Activated T-helper 1 cell treated with anti-CD3 and anti-CD28 coated beads, Interleukin-12 subunit alpha, Interleukin-12 subunit beta, Interleukin-2, Interleukin-4 antibody, amounts not matched to agents 30 ng/mL and 10 ng/mL and 1 ng/mL, durations not matched to agents 14 hours and 24 hours and 36 hours (primary cell): ENCODE measurements at regions of chr6 and their contacts with region 1.

Region 1: DNA sequence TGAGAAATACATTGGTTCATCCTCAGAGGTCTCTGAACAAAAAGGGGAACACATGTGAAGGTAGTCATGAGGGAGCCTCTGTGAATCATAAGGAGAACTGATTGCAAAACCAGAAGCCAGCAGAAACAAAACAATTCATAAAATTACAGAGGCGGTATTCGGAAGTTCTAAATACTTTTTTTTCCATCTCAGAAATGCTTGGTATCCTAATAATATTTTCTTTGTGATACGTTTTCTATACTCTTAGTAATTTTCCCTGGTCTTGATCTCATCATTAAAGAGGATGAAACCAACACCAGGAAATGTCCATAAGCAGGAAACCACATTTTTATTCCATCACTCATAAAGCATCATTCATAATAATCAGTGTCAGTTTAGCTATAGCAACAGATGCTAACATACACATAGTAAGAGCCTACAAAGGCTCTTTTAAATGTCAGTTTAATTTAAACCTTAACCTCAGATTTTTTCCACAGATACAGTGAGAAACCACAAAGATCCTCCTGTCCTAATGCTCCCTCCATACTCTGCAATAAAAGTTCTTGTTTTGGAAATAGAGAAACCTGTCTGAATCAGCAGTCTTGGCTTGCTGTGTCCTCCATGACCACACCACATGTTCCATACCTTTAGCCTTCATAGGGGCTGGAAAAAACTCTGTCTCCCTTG is 29.2 kb downstream of the SGK1 start:
- DNase-seq: no peak
- H3K4me3 Mint-ChIP-seq: peak overlapping the region; percentile 72
- H3K27ac Mint-ChIP-seq: peak overlapping the region; percentile 96
- H3K4me1 Mint-ChIP-seq: peaks cover 38% of the 10 kb centered on the region
- H3K27me3 Mint-ChIP-seq: peaks cover 2% of the 10 kb centered on the region

Region 2: DNA sequence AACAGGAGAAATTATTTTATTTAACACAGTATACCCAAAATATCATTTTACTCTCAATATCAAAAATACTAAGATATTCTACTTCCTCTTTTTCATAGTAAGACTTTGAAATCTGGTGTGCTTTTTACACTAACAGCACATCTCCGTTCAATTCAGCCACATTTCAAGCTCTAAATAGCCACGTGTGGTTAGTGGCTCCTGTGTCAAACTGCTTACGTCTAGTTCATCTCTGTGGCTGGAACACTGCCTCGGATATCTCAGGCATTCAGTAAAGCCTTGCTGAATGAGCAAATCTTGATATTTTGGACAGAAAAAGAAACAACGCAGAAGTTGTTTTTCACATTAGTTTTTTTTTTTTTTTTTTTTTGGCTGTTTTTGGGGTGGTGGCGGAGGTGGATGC is 911.5 kb before region 1 on chr6:
- intact Hi-C with region 1: no loop called
- DNase-seq: no peak
- H3K4me3 Mint-ChIP-seq: no peak overlapping the region
- H3K27ac Mint-ChIP-seq: no peak overlapping the region
- H3K4me1 Mint-ChIP-seq: no peaks in the 10 kb centered on the region
- H3K27me3 Mint-ChIP-seq: peaks cover 4% of the 10 kb centered on the region

Region 3: GRCh38 chr6:134235937-134236751 is 52.5 kb before region 1 on chr6:
- intact Hi-C with region 1: loop called (anchors 1 kb)
- DNase-seq: no peak
- H3K4me3 Mint-ChIP-seq: peak overlapping the region; percentile 17
- H3K27ac Mint-ChIP-seq: peak overlapping the region; percentile 85
- H3K4me1 Mint-ChIP-seq: peaks cover 52% of the 10 kb centered on the region
- H3K27me3 Mint-ChIP-seq: no peaks in the 10 kb centered on the region

Region 4: DNA sequence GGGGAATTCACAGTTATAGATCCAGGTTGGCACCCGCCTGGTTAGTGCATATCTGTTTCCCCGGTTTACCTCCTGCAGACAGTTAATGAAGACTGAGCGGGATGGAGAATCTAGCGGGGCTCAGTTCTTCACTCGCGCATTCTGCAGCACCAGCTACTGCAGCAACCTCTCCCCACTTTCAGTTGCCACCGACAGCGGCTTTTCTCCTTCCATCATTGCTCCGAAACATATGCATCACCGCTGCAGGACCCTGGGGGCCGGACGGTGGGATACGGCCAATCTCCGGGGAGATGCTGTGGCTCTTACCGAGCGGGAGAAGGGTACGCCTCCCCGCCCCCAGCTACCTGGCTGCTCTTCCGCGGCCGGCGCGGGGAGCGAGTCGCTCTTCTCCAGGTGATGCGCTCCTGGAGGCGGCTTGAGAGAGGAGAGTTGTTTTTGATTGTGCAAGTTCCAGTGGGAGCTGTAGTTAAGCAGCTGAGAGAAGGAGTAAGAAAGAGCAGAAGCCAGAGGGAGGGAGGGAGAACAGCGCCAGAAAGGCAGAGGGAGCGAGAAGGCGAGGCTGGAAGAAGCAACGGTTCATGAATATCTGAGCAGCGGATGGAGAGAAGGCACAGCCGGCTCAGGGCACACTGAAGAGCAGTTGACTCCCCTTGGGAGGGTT is 28.9 kb after region 1 on chr6 and contains the start of gene SGK1:
- intact Hi-C with region 1: loop called (anchors 1 kb)
- DNase-seq: peak; percentile 3
- H3K4me3 Mint-ChIP-seq: peak within 1 kb of the TSS; percentile 91
- H3K27ac Mint-ChIP-seq: peak within 1 kb of the TSS; percentile 57
- H3K4me1 Mint-ChIP-seq: peaks cover 39% of the 10 kb centered on the region
- H3K27me3 Mint-ChIP-seq: peaks cover 16% of the 10 kb centered on the region
- total RNA-seq, gene SGK1: 48.7 and 50.2 TPM in 2 replicates

Region 5: GRCh38 chr6:134379086-134379485 is 90.4 kb after region 1 on chr6:
- intact Hi-C with region 1: loop called (anchors 1 kb)
- DNase-seq: peak; percentile 49
- H3K4me3 Mint-ChIP-seq: peak overlapping the region; percentile 38
- H3K27ac Mint-ChIP-seq: peak overlapping the region; percentile 82
- H3K4me1 Mint-ChIP-seq: peaks cover 47% of the 10 kb centered on the region
- H3K27me3 Mint-ChIP-seq: no peaks in the 10 kb centered on the region

Region 6: DNA sequence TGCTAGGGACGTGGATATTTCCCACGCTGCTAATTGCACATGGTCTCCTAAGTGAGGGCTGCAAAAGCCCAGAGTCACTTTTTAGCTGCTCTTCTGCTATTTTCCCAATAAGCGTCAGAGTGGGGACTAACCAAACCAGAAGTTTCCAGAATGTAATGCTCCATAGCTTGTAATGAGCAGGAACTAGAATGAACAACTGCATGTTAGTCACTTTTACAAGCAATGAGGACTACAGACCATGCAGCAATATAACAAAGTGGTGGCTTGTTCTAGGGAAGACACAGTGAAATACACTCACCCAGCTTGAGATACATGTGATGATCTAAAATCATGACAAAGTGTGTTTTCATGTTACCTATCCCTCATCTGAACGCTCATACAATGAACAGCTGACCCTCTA is 343.4 kb after region 1 on chr6:
- intact Hi-C with region 1: loop called (anchors 2 kb)
- DNase-seq: no peak
- H3K4me3 Mint-ChIP-seq: no peak overlapping the region
- H3K27ac Mint-ChIP-seq: no peak overlapping the region
- H3K4me1 Mint-ChIP-seq: peaks cover 29% of the 10 kb centered on the region
- H3K27me3 Mint-ChIP-seq: peaks cover 20% of the 10 kb centered on the region

Region 7: GRCh38 chr6:135088818-135089809 is 800.4 kb after region 1 on chr6:
- intact Hi-C with region 1: loop called (anchors 5 kb)
- DNase-seq: peak; percentile 58
- H3K4me3 Mint-ChIP-seq: peak overlapping the region; percentile 57
- H3K27ac Mint-ChIP-seq: peak overlapping the region; percentile 93
- H3K4me1 Mint-ChIP-seq: peaks cover 89% of the 10 kb centered on the region
- H3K27me3 Mint-ChIP-seq: no peaks in the 10 kb centered on the region